CD14-positive monocyte (primary cell): ENCODE measurements at regions of chr4 and their contacts with region 1.

Region 1: GRCh38 chr4:88514557-88515511 is 8.7 kb downstream of the PYURF start:
- DNase-seq: no peak
- H3K4me3 ChIP-seq: no peak overlapping the region
- H3K4me3 Mint-ChIP-seq: no peak overlapping the region
- H3K27ac ChIP-seq: no peak overlapping the region
- H3K27ac Mint-ChIP-seq: no peak overlapping the region
- H3K4me1 ChIP-seq: no peaks in the 10 kb centered on the region
- H3K4me1 Mint-ChIP-seq: no peaks in the 10 kb centered on the region
- H3K27me3 ChIP-seq: no peaks in the 10 kb centered on the region
- H3K27me3 Mint-ChIP-seq: no peaks in the 10 kb centered on the region
- CTCF ChIP-seq: no peak

Region 2: DNA sequence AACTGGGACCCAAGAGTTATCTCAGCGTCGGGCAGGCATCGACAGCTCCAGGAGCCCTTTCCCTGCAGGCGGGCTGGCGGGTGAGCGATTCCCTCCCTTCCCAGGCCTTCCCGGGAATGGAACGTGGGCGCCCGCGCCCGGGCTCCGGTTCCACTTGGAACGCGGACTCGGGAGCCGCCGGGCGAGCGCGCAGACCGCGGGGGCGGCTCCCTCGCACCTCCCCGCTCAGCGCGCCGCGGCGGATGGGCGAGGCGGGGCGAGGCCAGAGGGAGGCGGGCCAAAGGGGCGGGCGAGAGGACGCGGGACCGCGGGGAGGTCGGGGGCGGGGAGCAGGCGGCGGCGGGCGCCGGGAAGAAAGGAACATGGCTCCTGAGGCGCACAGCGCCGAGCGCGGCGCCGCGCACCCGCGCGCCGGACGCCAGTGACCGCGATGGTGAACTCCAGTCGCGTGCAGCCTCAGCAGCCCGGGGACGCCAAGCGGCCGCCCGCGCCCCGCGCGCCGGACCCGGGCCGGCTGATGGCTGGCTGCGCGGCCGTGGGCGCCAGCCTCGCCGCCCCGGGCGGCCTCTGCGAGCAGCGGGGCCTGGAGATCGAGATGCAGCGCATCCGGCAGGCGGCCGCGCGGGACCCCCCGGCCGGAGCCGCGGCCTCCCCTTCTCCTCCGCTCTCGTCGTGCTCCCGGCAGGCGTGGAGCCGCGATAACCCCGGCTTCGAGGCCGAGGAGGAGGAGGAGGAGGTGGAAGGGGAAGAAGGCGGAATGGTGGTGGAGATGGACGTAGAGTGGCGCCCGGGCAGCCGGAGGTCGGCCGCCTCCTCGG is 507.3 kb before region 1 on chr4 and contains the start of gene PKD2:
- intact Hi-C with region 1: no loop called
- DNase-seq: peak; percentile 38 to 55 (median 50)
- H3K4me3 ChIP-seq: peak within 1 kb of the TSS; percentile 51 to 94 (median 84)
- H3K4me3 Mint-ChIP-seq: peak within 1 kb of the TSS; percentile 91 to 93
- H3K27ac ChIP-seq: peak within 1 kb of the TSS in 1 of 2 donors; percentile 30
- H3K27ac Mint-ChIP-seq: peak within 1 kb of the TSS in 3 of 7 donors; percentile 36 to 66 (median 65)
- H3K4me1 ChIP-seq: peaks cover 32 to 38% of the 10 kb centered on the region in 2 donors
- H3K4me1 Mint-ChIP-seq: peaks cover 40% of the 10 kb centered on the region
- H3K27me3 ChIP-seq: peaks cover 0 to 8% of the 10 kb centered on the region in 2 donors
- H3K27me3 Mint-ChIP-seq: peaks cover 10 to 12% (median 12%) of the 10 kb centered on the region in 3 donors
- CTCF ChIP-seq: no peak
- polyA plus RNA-seq, gene PKD2: 1.2 to 9.7 (median 2.4) TPM

Region 3: GRCh38 chr4:88033309-88033708 is 481.5 kb before region 1 on chr4:
- intact Hi-C with region 1: loop called (anchors 10 kb)
- DNase-seq: peak; percentile 40 to 57 (median 55)
- H3K4me3 ChIP-seq: no peak overlapping the region
- H3K4me3 Mint-ChIP-seq: no peak overlapping the region
- H3K27ac ChIP-seq: no peak overlapping the region
- H3K27ac Mint-ChIP-seq: no peak overlapping the region
- H3K4me1 ChIP-seq: peaks cover 0 to 6% of the 10 kb centered on the region in 2 donors
- H3K4me1 Mint-ChIP-seq: peaks cover 14% of the 10 kb centered on the region
- H3K27me3 ChIP-seq: no peaks in the 10 kb centered on the region
- H3K27me3 Mint-ChIP-seq: peaks cover 0 to 3% (median 1%) of the 10 kb centered on the region in 3 donors
- CTCF ChIP-seq: peak; percentile 71

Region 4: DNA sequence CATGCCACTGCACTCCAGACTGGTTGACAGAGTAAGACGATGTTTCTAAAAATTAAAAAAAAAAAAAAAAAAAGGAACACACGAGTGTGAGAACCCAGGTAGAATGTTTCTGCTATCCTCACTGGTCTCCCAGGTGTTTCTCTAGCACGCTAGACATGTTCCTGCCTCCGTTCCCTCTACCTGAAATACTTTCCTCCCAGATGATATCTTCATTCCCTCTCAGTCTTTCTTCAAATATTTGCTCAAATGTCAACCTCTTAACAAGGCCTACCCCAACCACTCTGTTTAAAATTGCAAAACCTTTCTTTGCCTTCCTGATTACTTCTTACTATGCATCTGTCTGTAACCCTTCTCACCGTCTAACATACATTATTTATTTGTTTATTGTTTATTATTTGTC is 296.9 kb before region 1 on chr4:
- intact Hi-C with region 1: loop called (anchors 2 kb)
- DNase-seq: no peak
- H3K4me3 ChIP-seq: no peak overlapping the region
- H3K4me3 Mint-ChIP-seq: no peak overlapping the region
- H3K27ac ChIP-seq: no peak overlapping the region
- H3K27ac Mint-ChIP-seq: peak overlapping the region in 1 of 7 donors; percentile 0
- H3K4me1 ChIP-seq: no peaks in the 10 kb centered on the region
- H3K4me1 Mint-ChIP-seq: peaks cover 6% of the 10 kb centered on the region
- H3K27me3 ChIP-seq: no peaks in the 10 kb centered on the region
- H3K27me3 Mint-ChIP-seq: peaks cover 0 to 2% (median 0%) of the 10 kb centered on the region in 3 donors
- CTCF ChIP-seq: no peak

Region 5: DNA sequence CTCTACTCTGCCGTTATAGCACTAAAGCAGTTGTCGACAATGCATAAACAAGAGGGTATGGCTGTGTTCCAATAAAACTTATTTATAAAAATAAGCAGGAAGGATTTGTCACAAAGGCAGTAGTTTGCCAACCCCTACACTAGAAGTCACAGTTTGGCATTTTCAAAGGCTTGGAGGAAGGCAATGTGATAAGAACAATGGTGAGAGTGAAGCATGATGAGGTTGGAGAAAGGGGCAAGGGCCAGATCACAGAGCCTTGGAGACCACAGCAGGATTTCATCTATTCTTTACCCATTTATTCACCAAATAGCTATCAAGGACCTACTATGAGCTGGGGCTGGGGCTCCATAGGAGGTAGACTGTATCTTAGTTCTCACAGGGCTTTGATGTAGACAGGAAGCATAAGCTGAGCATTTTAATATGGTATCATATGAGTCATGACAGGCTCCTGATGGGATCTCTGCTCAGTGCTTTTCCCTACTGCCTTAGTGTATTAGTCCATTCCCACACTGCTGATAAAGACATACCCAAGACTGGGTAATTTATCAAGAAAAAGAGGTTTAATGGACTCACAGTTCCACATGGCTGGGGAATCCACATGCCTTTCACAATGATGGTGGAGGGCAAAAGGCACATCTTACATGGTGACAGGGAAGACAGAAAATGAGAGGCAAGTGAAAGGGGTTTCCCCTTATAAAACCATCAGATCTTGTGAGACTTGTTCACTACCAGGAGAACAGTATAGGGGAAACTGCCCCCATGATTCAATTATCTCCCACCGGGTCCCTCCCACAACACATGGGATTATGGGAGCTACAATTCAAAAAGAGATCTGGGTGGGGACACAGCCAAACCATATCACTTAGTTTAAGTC is 289.4 kb before region 1 on chr4:
- intact Hi-C with region 1: loop called in 1 of 2 experiments (anchors 2 kb)
- DNase-seq: no peak
- H3K4me3 ChIP-seq: no peak overlapping the region
- H3K4me3 Mint-ChIP-seq: no peak overlapping the region
- H3K27ac ChIP-seq: no peak overlapping the region
- H3K27ac Mint-ChIP-seq: no peak overlapping the region
- H3K4me1 ChIP-seq: no peaks in the 10 kb centered on the region
- H3K4me1 Mint-ChIP-seq: no peaks in the 10 kb centered on the region
- H3K27me3 ChIP-seq: no peaks in the 10 kb centered on the region
- H3K27me3 Mint-ChIP-seq: no peaks in the 10 kb centered on the region
- CTCF ChIP-seq: no peak

Region 6: DNA sequence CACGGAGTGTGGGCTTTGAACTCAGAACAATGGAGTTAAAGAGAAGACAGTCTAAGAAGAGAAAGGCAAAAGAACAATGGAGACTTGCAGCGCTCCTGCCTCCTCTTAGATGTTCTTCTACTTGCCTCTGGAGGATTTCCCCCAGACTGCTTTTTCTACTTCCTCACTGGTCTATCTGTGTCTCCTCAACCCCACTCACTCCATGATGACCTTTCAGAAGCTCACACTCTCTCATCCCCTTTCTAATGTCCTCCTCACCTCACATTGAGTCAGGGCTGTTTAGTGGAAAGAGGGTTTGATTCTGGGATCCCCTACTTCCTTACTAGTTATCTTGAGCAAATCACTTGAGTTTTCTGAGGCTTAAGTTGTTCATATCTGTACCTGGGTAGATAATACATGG is 148.4 kb before region 1 on chr4:
- intact Hi-C with region 1: loop called in 1 of 2 experiments (anchors 10 kb)
- DNase-seq: no peak
- H3K4me3 ChIP-seq: no peak overlapping the region
- H3K4me3 Mint-ChIP-seq: no peak overlapping the region
- H3K27ac ChIP-seq: no peak overlapping the region
- H3K27ac Mint-ChIP-seq: no peak overlapping the region
- H3K4me1 ChIP-seq: no peaks in the 10 kb centered on the region
- H3K4me1 Mint-ChIP-seq: peaks cover 2% of the 10 kb centered on the region
- H3K27me3 ChIP-seq: no peaks in the 10 kb centered on the region
- H3K27me3 Mint-ChIP-seq: peaks cover 0 to 3% (median 1%) of the 10 kb centered on the region in 3 donors
- CTCF ChIP-seq: no peak

Region 7: GRCh38 chr4:88743696-88744095 is 228.9 kb after region 1 on chr4:
- intact Hi-C with region 1: no loop called
- DNase-seq: no peak
- H3K4me3 ChIP-seq: no peak overlapping the region
- H3K4me3 Mint-ChIP-seq: no peak overlapping the region
- H3K27ac ChIP-seq: no peak overlapping the region
- H3K27ac Mint-ChIP-seq: no peak overlapping the region
- H3K4me1 ChIP-seq: no peaks in the 10 kb centered on the region
- H3K4me1 Mint-ChIP-seq: no peaks in the 10 kb centered on the region
- H3K27me3 ChIP-seq: no peaks in the 10 kb centered on the region
- H3K27me3 Mint-ChIP-seq: no peaks in the 10 kb centered on the region
- CTCF ChIP-seq: no peak